HepG2 (cell line): ENCODE measurements at regions of chr9 and their contacts with region 1.

Region 1: DNA sequence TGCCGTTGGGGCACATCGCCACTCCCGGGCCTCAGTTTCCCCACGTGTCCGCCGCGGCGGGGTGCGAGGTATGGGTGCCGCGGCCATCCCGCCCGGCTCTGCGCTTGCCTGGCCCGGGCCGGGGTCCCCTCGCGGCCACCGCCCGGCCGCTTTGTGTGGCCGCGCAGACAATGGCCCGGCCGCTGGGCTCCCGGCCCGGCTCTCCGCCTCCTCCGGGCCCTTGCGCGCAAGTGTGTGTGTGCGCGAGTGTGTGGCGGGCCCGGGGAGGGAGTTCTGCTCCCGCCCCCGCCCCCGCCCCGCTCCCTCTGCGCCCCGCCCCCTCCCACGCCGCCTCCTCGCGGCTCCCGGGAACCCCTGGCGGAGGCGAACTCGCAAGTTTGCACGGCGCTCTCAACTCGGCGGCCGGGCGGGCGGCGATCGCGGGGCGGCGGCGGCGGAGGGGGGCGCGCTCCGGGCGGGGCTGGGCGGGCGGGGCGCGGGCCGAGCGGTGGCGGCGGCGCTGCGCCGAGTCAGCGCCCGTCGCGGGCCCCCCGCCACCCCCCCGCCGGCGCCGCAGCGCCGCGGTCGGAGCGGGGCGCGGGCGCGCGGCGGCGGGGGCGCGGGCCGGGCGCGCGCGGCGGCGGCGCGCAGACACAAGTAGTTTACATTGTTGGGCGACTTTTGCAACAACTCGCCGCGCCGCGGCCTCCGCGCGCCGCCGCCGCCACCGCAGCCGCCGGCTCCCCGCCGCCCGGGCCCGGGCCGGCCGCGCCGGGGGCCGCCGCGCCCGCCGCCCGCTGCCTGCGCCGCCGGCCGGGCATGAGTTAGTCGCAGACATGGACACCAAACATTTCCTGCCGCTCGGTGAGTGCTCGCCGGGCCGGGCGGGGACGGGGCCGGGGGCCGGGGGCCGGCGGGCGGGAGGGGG is at the start of gene RXRA:
- DNase-seq: peak; percentile 60
- ATAC-seq: peak; percentile 6
- H3K4me3 ChIP-seq: peak within 1 kb of the TSS; percentile 73 to 98 (median 83)
- H3K27ac ChIP-seq: peak within 1 kb of the TSS; percentile 99
- H3K4me1 ChIP-seq: peaks cover 77% of the 10 kb centered on the region
- H3K27me3 ChIP-seq: no peaks in the 10 kb centered on the region; a peak in 2 of 5 replicates
- CTCF ChIP-seq: peak; percentile 49
- EP300 ChIP-seq: no peak
- POLR2A ChIP-seq: 0 out of 4 replicates have a peak, but pooled peaks of 1 of the 2 experiments have one; percentile 50
- RAD21 ChIP-seq: no peak
- total RNA-seq, gene RXRA: 19.2 and 29.2 TPM in 2 replicates

Region 2: DNA sequence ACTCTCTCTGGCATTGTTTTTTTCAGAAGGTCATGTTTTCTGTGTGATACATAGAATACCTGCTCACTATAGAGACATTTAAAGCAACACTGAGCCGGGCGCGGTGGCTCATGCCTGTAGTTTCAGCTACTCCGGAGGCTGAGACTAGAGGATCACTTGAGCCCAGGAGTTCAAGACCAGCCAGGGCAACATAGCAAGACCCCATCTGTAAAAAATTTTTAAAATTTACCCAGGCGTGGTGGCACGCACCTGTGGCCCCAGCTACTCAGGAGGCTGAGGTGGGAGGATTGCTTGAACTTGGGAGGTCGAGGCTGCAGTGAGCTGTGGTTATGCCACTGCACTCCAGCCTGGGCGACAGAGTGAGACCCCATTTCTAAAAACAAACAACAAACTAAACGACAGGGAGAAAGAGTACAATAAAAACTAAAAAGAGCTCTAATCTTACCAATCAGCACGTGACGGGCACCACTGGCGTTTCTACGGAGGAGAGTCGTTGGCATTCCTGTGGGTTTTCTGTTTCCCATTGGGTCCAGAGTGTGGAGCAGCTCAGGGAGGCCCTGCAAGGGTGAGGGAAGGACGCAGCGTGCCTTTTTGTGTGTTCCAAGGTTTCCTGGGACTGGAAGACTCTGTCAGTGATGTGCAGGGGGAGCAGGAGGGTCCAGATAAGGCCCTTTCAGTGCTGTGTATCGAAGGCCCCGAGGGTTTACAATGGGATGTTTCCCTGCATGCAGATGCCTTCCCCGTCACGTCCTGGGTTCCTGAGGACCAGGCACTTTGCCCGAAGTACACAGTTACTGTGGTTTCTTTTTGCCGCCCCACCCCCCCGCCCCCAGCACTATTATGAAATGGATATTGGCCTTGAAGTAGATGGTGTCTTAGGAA is 154.5 kb before region 1 on chr9:
- CTCF ChIA-PET with region 1: no interaction called
- POLR2A ChIA-PET with region 1: interaction called, 13 read pairs
- in situ Hi-C with region 1: loop called (anchors 10 kb)
- intact Hi-C with region 1: loop called (anchors 10 kb)
- DNase-seq: no peak
- ATAC-seq: no peak
- H3K4me3 ChIP-seq: peak overlapping the region in 2 of 3 experiments; percentile 24 to 63; a peak in 2 of 6 replicates
- H3K27ac ChIP-seq: no peak overlapping the region
- H3K4me1 ChIP-seq: peaks cover 28% of the 10 kb centered on the region
- H3K27me3 ChIP-seq: peaks cover 2 to 39% of the 10 kb centered on the region in 2 experiments; a peak in 4 of 5 replicates
- CTCF ChIP-seq: no peak
- EP300 ChIP-seq: no peak
- POLR2A ChIP-seq: no peak
- RAD21 ChIP-seq: no peak

Region 3: DNA sequence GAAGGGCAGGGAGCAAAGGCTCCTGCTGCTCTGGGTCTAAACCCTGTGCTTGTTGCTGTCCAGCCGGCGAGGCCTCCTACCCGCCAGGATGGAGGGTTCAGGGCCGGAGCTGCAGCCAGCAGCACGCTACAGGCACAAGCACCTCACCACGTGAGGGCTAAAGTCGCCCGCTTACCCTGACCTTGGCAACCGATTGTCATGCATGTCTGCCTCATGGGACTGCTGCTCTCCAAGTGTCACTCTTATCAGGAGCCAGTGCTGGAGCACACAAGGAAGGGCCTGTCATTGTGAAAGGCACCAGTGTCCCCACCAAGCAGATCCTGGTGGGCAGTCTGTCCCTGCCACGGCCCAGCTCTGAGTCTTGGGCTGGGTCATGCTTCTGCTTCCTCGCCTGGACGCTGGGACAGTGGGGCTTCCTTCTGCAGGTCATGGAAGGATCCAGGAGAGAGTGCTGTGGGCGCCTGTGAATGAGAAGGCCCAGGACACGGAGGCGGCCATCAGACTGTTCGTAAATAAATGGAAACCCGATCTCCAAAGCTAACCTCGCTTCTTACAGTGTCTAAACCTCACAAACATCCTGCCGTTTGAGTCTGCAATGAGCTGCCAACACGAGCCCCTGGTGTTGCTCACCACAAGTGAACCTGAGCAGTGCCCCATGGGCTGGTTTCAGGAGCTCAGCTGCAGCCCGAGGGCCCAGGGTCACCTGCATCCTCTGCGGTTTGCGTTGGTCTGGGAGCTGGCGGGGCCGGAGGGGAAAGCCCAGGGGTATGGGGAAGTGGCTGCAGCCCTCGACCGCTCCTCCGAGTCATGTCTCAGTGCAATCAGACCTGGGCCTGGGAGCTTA is 58.0 kb before region 1 on chr9:
- CTCF ChIA-PET with region 1: no interaction called
- POLR2A ChIA-PET with region 1: interaction called, 10 read pairs
- in situ Hi-C with region 1: no loop called
- intact Hi-C with region 1: loop called (anchors 5 kb)
- DNase-seq: peak; percentile 23
- ATAC-seq: peak; percentile 56
- H3K4me3 ChIP-seq: peak overlapping the region in 1 of 3 experiments; percentile 26; a peak in 1 of 6 replicates
- H3K27ac ChIP-seq: no peak overlapping the region
- H3K4me1 ChIP-seq: peaks cover 62% of the 10 kb centered on the region
- H3K27me3 ChIP-seq: peaks cover 19 to 59% of the 10 kb centered on the region in 2 experiments
- CTCF ChIP-seq: no peak; the same call in 1 of the 2 replicates
- EP300 ChIP-seq: no peak
- POLR2A ChIP-seq: no peak
- RAD21 ChIP-seq: no peak

Region 4: DNA sequence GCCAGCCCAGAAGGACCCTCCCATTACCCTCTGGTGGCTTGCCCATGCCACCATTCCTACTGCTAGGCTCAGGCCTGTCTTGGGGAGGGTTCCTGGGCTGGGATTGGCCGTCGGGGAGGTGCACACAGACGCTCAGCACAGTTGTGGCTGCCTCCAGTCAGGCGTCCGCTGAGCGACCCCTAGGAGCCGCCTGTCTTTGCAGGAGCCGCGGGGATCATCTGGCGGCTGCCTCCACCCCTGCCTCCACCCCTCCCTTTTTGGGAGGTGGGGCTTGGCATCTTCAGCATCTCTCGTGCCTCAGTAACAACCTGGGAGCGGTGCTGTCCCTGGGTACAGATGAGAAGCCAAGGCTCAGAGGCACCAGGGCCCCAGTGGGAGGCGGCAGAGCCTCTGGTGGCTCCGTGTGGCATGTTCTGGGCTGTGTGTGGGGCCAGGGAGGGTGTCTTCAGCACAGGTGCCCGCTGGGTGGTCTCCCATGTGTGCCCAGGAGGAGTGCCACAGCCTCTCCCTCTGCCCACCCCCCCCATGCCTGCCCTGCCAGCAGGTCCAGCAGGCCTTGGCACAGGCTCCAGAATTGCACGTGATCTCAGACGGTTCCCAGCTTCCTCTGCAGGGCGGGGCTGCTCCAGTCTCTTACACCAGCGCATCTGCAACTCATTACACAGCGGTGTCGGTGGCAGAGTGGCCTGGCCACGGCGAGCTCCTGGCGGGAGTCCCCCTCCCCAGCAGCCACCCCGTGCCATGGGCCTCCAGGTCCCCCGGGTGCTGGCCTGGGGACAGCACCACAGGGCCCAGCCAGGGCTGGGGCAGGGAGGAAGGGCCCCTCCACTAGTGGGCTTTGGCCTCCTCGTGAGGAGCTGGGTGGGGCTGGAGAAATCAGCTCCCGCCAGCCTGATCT is 40.0 kb after region 1 on chr9:
- CTCF ChIA-PET with region 1: no interaction called
- POLR2A ChIA-PET with region 1: interaction called, 23 read pairs
- in situ Hi-C with region 1: no loop called
- intact Hi-C with region 1: loop called (anchors 5 kb)
- DNase-seq: no peak
- ATAC-seq: no peak
- H3K4me3 ChIP-seq: no peak overlapping the region
- H3K27ac ChIP-seq: peak overlapping the region; percentile 74
- H3K4me1 ChIP-seq: peaks cover 73% of the 10 kb centered on the region
- H3K27me3 ChIP-seq: no peaks in the 10 kb centered on the region
- CTCF ChIP-seq: no peak
- EP300 ChIP-seq: no peak
- POLR2A ChIP-seq: no peak
- RAD21 ChIP-seq: no peak